HEK293 (cell line): ENCODE measurements at regions of chrX and their contacts with region 1.

Region 1: GRCh38 chrX:149938427-149939270 is at the start of gene EOLA2:
- H3K4me3 ChIP-seq: peak within 1 kb of the TSS; percentile 79
- H3K27ac ChIP-seq: peak within 1 kb of the TSS; percentile 65
- H3K4me1 ChIP-seq: no peaks in the 10 kb centered on the region
- CTCF ChIP-seq: peak; percentile 97

Region 2: GRCh38 chrX:149208307-149208706 is 730.3 kb before region 1 on chrX:
- CTCF ChIA-PET with region 1: no interaction called
- POLR2A ChIA-PET with region 1: no interaction called
- H3K4me3 ChIP-seq: no peak overlapping the region
- H3K27ac ChIP-seq: no peak overlapping the region
- H3K4me1 ChIP-seq: no peaks in the 10 kb centered on the region
- CTCF ChIP-seq: no peak

Region 3: GRCh38 chrX:149539283-149540130 is 399.1 kb before region 1 on chrX:
- CTCF ChIA-PET with region 1: no interaction called
- POLR2A ChIA-PET with region 1: interaction called, 51 read pairs
- H3K4me3 ChIP-seq: peak overlapping the region; percentile 44
- H3K27ac ChIP-seq: peak overlapping the region; percentile 43; the same call in 1 of the 2 replicates
- H3K4me1 ChIP-seq: no peaks in the 10 kb centered on the region
- CTCF ChIP-seq: no peak

Region 4: DNA sequence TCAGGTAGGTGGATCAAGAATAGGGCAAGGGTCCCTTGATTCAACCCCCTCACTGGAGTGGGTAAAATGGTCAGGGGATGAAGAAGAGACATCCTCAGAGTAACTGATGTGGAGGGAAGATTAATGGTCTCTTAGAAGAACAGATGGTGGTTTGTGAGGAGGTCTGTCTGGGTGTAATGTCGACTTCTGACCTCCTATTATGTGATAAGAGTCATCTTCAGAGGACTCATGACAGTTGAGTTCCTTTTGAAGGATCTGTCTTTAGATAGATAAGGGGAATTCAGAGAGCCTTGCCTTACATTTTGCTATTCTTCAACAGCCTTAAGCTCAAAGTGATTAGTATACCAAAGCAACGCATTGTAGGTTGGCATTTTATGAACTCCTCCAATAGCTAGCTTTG is 84.7 kb before region 1 on chrX:
- CTCF ChIA-PET with region 1: no interaction called
- POLR2A ChIA-PET with region 1: no interaction called
- H3K4me3 ChIP-seq: no peak overlapping the region
- H3K27ac ChIP-seq: no peak overlapping the region
- H3K4me1 ChIP-seq: peaks cover 3% of the 10 kb centered on the region; the same call in 1 of the 2 replicates
- CTCF ChIP-seq: no peak

Region 5: DNA sequence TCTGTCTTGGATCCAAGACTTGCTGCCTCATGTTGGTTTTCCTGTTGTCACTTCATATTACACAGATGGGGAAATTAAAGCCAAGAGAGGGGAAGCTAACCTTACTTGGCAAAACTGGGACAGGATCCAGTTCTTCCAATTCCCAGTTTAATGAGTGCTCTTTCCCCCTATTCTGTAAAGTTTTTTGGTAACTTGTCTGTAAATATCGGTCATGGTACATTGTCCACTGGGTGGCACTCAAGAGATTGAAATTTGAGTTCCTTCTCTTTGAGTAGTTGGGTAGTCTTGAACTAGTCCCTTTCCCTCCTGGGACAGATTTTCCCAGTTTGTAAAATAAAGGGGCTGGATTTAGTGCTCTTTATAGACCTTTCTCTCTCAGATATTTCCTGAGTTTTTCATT is 12.0 kb after region 1 on chrX:
- CTCF ChIA-PET with region 1: interaction called, 11 read pairs
- POLR2A ChIA-PET with region 1: interaction called, 3 read pairs
- H3K4me3 ChIP-seq: no peak overlapping the region
- H3K27ac ChIP-seq: no peak overlapping the region
- H3K4me1 ChIP-seq: no peaks in the 10 kb centered on the region
- CTCF ChIP-seq: 0 out of 2 replicates have a peak, but pooled peaks have one; percentile 18

Region 6: GRCh38 chrX:149992918-149993317 is 54.3 kb after region 1 on chrX:
- CTCF ChIA-PET with region 1: no interaction called
- POLR2A ChIA-PET with region 1: no interaction called
- H3K4me3 ChIP-seq: no peak overlapping the region
- H3K27ac ChIP-seq: no peak overlapping the region
- H3K4me1 ChIP-seq: no peaks in the 10 kb centered on the region
- CTCF ChIP-seq: no peak

Region 7: GRCh38 chrX:150365051-150365989 is 426.7 kb after region 1 on chrX:
- CTCF ChIA-PET with region 1: interaction called, 3 read pairs
- POLR2A ChIA-PET with region 1: interaction called, 21 read pairs
- H3K4me3 ChIP-seq: peak overlapping the region; percentile 59
- H3K27ac ChIP-seq: peak overlapping the region; percentile 67
- H3K4me1 ChIP-seq: peaks cover 3% of the 10 kb centered on the region; the same call in 1 of the 2 replicates
- CTCF ChIP-seq: peak; percentile 92